ENCODE measurements at regions of chr2 and their contacts with region 1.

Region 1: DNA sequence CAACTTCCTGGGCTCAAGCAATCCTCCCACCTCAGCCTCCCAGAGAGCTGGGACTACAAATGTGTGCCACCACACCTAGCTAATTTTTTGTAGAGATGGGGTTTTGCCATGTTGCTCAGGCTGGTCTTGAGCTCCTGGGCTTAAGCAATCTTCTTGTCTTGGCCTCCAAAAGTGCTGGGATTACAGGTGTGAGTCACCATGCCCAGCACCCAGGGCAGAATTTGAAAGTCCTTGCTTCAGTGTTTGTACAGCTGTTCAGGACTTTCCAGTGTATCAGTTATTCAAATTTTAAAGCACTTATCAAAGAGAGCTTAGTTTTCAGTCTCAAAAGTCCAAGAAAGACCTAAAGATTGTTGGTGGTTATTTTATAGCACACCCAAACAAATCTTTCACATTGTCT is 43.6 kb upstream of the VPS54 start:
- DNase-seq: no peak
- H3K4me3 Mint-ChIP-seq: no peak overlapping the region
- H3K27ac Mint-ChIP-seq: no peak overlapping the region
- H3K4me1 Mint-ChIP-seq: peaks cover 29% of the 10 kb centered on the region
- H3K27me3 Mint-ChIP-seq: peaks cover 2% of the 10 kb centered on the region

Region 2: DNA sequence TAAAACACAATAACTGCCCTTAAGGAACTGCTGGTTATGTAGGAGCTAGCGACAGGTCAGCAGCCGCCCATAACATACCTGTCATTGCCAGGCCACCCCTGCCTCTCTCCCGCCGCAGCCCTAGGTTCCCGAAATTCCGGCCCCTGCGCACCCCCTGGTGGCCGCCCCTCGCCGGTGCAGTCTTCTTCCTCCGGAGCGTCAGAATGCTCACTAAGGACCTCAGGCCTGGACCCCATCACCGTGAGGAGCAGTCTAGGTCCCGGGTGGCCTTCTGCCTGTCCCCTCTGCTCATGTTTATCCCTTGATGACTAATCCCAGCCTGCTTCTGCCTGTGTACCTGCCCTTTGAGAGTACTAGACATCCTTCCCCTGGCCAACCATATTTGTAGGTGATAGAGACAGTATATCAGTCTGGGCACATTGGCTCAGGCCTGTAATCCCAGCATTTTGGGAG is 810.7 kb after region 1 on chr2:
- CTCF ChIA-PET with region 1: no interaction called
- POLR2A ChIA-PET with region 1: no interaction called
- intact Hi-C with region 1: loop called (anchors 10 kb)
- DNase-seq: peak; percentile 89
- H3K4me3 Mint-ChIP-seq: peak overlapping the region; percentile 23
- H3K27ac Mint-ChIP-seq: no peak overlapping the region
- H3K4me1 Mint-ChIP-seq: peaks cover 7% of the 10 kb centered on the region
- H3K27me3 Mint-ChIP-seq: peaks cover 2% of the 10 kb centered on the region